Activated CD4-positive, alpha-beta T cell treated with anti-CD3 and anti-CD28 coated beads, Interleukin-2, amount 10 ng/mL, durations not matched to agents 24 days and 14 days (primary cell): ENCODE measurements at regions of chr4 and their contacts with region 1.

Region 1: DNA sequence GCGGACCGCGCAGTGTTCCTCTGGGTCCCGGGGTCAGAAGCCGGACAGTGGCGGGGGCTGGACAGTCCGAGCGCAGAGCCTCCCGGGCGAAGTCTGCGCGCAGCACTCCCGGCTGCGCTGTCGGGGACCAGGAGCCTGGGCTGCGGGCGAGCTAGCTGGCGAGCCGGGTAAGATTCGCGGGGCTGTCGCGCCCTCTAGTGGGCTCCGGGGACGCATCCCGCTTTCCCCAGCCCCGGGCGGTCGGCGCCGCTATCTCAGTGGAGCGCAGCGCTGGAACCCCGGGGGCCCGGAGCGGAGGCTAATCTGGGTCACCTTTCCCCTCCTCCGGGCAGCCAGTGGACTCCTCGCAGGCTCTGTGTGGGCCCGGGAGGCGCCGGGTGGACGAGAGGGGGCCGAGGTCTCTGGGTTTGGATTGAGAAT is 4.2 kb downstream of the PDGFRA start:
- DNase-seq: peak; percentile 92
- H3K4me3 Mint-ChIP-seq: peak overlapping the region; percentile 75
- H3K27ac Mint-ChIP-seq: no peak overlapping the region
- H3K4me1 Mint-ChIP-seq: peaks cover 14% of the 10 kb centered on the region
- H3K27me3 Mint-ChIP-seq: peaks cover 55% of the 10 kb centered on the region

Region 2: GRCh38 chr4:52376132-52376704 is 1857.1 kb before region 1 on chr4:
- intact Hi-C with region 1: loop called (anchors 5 kb)
- DNase-seq: peak; percentile 66
- H3K4me3 Mint-ChIP-seq: no peak overlapping the region
- H3K27ac Mint-ChIP-seq: no peak overlapping the region
- H3K4me1 Mint-ChIP-seq: no peaks in the 10 kb centered on the region
- H3K27me3 Mint-ChIP-seq: peaks cover 9% of the 10 kb centered on the region

Region 3: DNA sequence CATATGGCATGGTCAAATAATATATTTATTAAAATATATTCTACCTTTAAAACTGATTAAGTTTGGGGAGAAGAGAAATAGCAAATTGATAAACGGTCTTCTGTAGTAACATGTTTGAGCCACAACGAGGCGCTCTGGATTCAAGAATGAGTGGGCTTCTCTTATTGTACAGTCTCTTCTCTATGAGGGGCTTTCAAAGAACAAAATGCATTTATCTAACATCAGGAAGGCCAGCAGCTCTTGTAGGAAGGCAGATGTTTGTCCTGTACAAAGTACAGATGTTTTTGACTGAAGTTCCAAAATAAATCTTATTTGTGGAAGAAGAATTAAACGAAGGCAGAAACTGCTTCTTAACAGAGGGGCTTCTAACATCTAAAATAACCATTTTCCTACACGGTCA is 1217.6 kb before region 1 on chr4:
- intact Hi-C with region 1: loop called (anchors 10 kb)
- DNase-seq: no peak
- H3K4me3 Mint-ChIP-seq: no peak overlapping the region
- H3K27ac Mint-ChIP-seq: peak overlapping the region; percentile 21
- H3K4me1 Mint-ChIP-seq: peaks cover 25% of the 10 kb centered on the region
- H3K27me3 Mint-ChIP-seq: no peaks in the 10 kb centered on the region

Region 4: DNA sequence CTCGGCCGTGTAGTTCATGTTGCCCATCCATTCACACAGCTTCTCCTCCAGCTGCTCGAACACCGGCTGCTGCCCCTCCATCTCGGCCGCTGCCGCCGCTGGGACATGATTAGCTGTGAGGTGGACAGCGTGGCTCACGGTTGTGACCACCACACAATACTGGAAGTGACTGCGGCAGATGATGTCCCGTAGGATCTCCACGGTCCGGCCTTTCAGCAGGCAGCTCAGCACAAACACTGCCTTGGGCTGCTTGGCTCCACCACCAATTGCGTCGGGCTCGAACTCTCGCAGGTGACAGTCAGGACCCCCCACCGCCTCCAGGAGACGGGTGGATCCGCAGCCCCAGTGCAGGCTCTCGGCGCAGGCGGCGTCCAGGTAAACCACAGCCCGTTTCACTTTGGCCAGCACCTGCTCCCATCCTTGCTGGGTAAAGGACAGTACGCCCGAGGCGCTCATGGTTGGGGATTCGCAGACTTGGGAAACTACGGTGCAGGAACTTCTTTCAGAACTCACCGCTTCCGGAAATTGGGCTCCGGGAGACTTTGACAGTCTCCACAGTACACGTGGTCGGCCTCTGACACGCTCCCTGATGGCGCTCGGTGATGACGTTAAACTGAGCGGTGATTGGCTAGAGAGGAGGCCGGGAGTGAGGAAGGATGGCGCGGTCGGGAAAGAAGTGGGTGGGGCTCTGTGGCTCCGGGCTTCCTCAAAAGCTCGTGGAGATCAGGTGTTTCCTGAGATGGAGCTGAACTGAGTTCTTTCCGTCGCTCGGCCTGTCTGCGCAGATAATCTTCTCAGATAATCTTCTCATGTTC is 867.6 kb before region 1 on chr4 and contains the start of gene SCFD2:
- intact Hi-C with region 1: loop called (anchors 5 kb)
- DNase-seq: peak; percentile 99
- H3K4me3 Mint-ChIP-seq: peak within 1 kb of the TSS; percentile 98
- H3K27ac Mint-ChIP-seq: peak within 1 kb of the TSS; percentile 95
- H3K4me1 Mint-ChIP-seq: peaks cover 33% of the 10 kb centered on the region
- H3K27me3 Mint-ChIP-seq: peaks cover 15% of the 10 kb centered on the region
- total RNA-seq, gene SCFD2: 35.0 and 39.9 TPM in 2 replicates

Region 5: DNA sequence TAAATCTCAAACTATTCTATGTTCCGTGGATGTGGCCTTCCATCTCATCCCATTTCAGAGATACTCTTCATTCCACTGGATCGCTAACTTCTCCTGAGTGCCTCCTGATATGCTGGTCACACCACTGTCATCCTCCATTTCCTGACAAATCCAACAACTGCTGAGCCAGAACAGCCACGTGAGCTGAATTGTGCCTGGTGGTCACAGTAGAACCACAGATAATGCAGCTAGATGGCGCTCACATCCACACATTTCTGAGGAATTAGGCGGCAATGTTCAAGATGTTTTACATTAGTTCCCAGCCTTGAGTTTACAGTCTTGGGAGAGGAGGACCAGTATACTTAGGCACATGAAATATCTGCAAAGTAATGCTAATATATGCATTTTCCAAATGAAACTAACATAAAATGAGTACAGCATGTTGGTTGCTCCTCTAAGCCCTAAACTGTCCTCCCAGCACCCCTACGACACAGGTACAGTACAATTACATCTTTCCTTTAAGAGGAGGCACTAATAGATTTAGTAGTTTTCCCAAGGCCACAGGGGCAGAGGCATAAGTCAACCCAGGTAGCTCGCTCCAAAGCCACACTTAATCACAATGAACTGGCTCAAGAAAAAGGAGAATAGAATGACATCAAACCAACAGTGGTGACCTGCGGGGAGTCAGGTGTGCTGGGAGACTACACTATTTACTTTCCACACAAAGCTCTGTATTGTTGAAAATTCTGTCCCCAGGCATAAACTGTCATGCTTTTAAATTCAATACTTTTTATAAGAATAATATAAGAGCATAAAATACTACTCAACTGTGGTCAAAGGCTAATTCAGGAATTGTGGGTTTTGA is 303.1 kb before region 1 on chr4:
- intact Hi-C with region 1: loop called (anchors 1 kb)
- DNase-seq: peak; percentile 83
- H3K4me3 Mint-ChIP-seq: no peak overlapping the region
- H3K27ac Mint-ChIP-seq: no peak overlapping the region
- H3K4me1 Mint-ChIP-seq: no peaks in the 10 kb centered on the region
- H3K27me3 Mint-ChIP-seq: peaks cover 4% of the 10 kb centered on the region